Right ventricle myocardium superior (tissue), 1 donor: ENCODE measurements at regions of chr1 and their contacts with region 1.

Region 1: DNA sequence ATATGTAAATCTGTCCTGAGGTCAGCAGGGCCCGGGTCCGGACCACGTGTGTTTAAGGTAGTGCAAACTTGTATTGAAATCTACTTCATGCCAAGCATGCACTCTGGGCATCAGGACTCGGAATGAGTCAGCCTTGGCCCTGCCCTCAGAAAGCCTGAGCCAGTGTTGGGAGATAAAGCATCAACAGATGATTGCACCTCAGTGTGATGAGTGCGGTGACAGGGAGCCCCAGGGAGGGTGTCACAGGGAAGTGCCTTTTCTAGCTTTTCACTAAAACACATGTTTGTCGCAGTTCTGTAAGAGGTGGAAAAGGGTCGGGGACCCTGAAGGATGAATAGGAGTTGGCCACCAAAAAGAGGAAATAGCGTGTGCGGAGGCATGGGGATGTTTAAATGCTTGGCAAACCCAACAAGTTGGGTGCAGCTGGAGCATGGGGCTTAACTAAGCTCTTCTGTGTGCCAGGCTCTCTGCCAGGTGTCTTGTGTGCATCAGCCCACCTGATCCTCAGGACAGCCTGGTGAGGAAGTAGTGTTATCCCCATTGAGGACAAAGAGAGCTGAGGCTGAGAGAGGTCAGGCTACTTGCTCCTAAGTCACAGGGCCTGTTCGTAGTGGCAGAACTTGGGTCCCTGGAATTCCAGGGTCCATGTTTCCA is 48.2 kb upstream of the EPB41 start:
- DNase-seq: no peak
- ATAC-seq: no peak

Region 2: GRCh38 chr1:28736450-28737306 is 129.4 kb before region 1 on chr1 and contains the start of gene YTHDF2:
- intact Hi-C with region 1: no loop called
- DNase-seq: peak; percentile 99
- ATAC-seq: peak; percentile 99
- total RNA-seq, gene YTHDF2: 31.3 TPM

Region 3: DNA sequence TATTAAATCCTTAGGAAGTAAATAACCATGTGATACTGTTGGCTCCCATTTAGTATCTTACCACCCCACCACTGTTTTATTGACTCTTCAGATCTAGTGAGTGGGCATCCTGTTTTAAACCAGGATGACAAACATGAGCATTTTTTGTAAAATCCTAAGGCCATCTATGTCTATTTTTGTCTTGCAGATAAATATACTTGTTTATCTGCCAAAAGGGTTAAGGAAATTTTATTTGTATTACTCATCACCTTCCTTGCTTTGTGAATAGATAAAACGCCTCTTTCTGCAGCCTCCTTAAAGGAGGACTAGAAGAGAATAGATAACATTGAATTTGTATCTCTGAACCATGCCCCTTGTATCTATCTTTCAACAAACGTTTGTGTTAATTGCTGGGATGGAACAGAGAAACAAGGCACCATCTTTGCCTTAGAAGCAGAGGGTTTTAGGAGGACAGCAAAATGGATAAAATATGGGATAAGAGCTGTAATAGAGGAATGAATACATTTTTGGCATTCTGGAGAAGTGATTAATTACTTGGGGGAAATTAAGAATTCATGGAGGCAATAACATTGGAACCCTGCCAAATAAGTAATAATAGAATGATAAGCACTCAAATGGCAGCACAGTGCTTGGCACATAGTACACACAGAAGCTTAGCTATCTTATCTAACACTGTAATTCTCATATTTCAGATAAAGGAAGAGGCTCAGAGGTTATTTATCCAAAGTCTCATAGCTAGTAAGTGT is 114.6 kb before region 1 on chr1:
- intact Hi-C with region 1: no loop called
- DNase-seq: no peak
- ATAC-seq: no peak

Region 4: GRCh38 chr1:28804071-28804470 is 62.1 kb before region 1 on chr1:
- intact Hi-C with region 1: loop called (anchors 2 kb)
- DNase-seq: no peak
- ATAC-seq: no peak

Region 5: GRCh38 chr1:28971980-28972771 is 106.1 kb after region 1 on chr1:
- intact Hi-C with region 1: no loop called
- DNase-seq: no peak
- ATAC-seq: no peak